CD14-positive monocyte (primary cell): ENCODE measurements at regions of chr10 and their contacts with region 1.

Region 1: DNA sequence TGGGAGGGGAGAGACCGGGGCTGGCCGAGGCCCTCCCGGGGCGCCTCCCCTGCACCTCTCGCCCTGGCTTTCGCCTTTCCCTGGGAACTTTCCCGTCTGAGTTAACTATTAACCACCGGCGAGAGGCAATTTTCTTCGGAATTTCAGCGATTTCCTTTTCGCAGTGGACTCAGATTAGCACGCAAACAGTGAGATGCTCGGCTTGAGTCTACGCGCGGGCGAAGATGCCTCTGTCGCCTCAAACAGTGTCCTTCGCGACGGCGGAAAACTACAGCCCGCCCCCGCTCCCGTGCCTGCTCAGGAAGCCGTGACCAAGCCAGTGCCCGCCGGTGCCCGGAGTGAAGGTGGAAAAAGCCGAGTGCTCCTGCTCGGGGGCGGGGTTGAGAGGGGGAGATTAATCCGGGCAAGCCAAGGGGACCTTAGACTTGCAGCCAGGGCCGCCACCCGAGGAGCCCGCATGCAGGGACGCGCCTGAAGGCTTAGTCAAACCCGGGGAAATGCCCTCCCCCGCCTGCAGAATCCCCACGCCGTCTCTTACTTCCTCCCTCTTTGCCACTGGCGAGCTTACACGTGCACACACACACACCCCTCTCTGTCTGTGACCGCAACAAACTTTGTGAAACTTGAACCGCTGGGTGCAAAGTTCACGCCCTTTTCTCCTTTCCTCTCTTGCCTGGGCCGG is 14.5 kb upstream of the PAX2 start:
- DNase-seq: peak; percentile 23 to 82 (median 42)
- H3K4me3 ChIP-seq: peak overlapping the region in 1 of 3 experiments; percentile 68
- H3K4me3 Mint-ChIP-seq: peak overlapping the region; percentile 73 to 89
- H3K27ac ChIP-seq: no peak overlapping the region
- H3K27ac Mint-ChIP-seq: peak overlapping the region in 1 of 7 donors; percentile 35
- H3K4me1 ChIP-seq: peaks cover 24 to 29% of the 10 kb centered on the region in 2 donors
- H3K4me1 Mint-ChIP-seq: peaks cover 31% of the 10 kb centered on the region
- H3K27me3 ChIP-seq: peaks cover 83 to 95% of the 10 kb centered on the region in 2 donors
- H3K27me3 Mint-ChIP-seq: peaks cover 93 to 99% (median 96%) of the 10 kb centered on the region in 3 donors
- CTCF ChIP-seq: no peak

Region 2: DNA sequence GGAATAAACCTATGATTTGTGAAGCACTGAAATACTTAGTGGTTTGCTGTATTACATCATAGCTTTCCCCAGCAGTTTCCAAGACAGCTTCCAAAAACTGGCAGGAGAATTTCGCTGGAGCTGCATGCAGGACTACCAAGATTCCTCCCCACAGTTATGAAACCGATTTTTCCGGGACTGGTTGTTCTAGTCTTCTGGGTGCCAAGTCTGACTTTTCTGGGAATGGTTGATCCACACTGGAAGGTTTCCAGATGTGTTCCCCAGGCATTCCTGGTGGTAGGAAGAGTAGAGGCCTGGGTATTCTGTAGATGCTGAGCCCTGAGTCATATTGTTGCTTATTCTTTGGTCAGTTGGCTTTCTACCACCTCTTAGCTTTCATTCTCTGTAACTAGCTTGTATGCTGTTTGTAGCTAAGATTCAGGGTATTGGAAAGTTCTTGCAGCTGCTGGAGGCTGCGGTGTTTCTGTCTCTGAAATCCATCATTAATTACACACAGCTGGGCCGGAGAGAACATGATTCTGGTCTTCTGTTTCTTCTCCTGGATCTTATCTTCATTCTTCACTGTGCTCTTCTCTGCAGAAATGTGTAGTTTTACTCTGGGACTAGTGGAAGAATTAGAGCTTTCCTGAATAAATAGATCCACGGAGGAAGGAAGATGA is 942.1 kb before region 1 on chr10:
- intact Hi-C with region 1: no loop called
- DNase-seq: no peak
- H3K4me3 ChIP-seq: no peak overlapping the region
- H3K4me3 Mint-ChIP-seq: no peak overlapping the region
- H3K27ac ChIP-seq: no peak overlapping the region
- H3K27ac Mint-ChIP-seq: no peak overlapping the region
- H3K4me1 ChIP-seq: no peaks in the 10 kb centered on the region
- H3K4me1 Mint-ChIP-seq: no peaks in the 10 kb centered on the region
- H3K27me3 ChIP-seq: no peaks in the 10 kb centered on the region
- H3K27me3 Mint-ChIP-seq: peaks cover 0 to 4% (median 0%) of the 10 kb centered on the region in 3 donors
- CTCF ChIP-seq: no peak

Region 3: DNA sequence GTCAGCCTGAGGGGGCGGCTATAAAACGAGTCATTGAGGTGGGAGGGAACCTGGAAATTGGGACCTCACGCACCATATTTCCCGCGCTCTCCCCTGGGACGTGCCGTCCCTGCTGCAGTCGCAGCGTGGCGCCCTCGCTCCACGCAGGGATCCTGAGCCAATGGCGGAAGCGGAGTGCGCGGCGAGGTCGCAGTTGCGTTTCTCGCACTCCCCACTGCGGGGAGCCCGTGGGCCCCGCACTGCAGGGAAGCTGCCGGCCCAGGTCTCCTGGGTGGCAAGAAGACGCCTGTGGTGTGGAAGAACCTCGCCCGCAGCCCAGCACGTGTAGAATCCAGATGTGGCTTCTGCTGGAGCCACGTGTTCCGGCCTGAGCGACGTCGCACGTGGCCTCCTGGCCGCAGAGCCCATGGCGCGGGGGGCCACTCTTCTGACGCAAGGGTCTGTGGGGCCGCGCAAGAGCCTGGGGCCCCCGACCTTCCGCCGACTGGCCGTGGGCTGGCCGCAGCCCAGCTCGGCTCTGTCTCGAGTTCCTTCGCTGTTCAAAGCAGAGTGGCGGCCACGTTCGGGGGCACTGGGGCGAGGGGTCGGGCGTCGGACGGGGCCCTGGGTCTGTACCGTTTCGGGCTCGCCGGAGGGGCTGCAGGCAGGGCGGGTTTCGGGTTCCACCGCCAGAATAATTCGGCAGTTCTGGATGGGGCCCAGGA is 168.7 kb before region 1 on chr10:
- intact Hi-C with region 1: loop called in 1 of 2 experiments (anchors 10 kb)
- DNase-seq: peak; percentile 60 to 77 (median 64)
- H3K4me3 ChIP-seq: peak overlapping the region in 1 of 3 experiments; percentile 13
- H3K4me3 Mint-ChIP-seq: peak overlapping the region; percentile 17 to 79
- H3K27ac ChIP-seq: no peak overlapping the region
- H3K27ac Mint-ChIP-seq: no peak overlapping the region
- H3K4me1 ChIP-seq: peaks cover 12 to 16% of the 10 kb centered on the region in 2 donors
- H3K4me1 Mint-ChIP-seq: peaks cover 18% of the 10 kb centered on the region
- H3K27me3 ChIP-seq: peaks cover 12 to 48% of the 10 kb centered on the region in 2 donors
- H3K27me3 Mint-ChIP-seq: peaks cover 51 to 64% (median 59%) of the 10 kb centered on the region in 3 donors
- CTCF ChIP-seq: peak; percentile 83

Region 4: DNA sequence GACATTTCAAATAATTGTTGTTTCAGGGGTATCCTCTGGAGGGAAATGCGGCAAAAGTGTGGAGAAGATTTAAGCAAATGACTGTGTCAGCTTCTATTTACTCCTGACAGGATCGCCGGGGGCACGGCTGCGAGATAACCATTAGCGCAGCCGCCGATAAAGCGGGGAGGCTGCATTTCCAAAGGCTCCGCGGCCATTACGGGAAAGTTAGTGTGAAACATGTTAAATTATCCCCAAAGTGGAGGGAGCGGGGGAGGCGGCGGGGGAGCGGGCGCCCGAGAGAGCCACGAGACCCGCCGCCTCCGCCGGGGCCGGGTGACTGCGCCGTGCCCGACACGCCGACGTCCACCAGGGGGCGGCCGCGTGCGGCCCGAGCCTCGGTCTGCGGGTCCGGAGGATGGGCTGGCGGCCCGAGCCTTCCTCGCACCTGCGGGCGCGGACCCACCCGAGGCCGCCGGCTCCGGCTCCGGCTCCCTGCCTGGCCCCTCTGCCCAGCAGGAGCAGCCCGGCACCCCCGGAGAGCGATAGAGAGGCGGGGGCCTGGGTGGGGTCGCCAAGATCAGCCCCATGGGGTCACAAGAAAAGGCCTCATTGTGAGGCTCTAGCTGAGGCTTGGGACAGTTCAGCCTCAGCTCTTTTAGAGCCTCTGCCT is 59.9 kb before region 1 on chr10:
- intact Hi-C with region 1: no loop called
- DNase-seq: peak in 1 of 3 donors; percentile 13
- H3K4me3 ChIP-seq: no peak overlapping the region
- H3K4me3 Mint-ChIP-seq: peak overlapping the region in 1 of 2 donors; percentile 65
- H3K27ac ChIP-seq: no peak overlapping the region
- H3K27ac Mint-ChIP-seq: no peak overlapping the region
- H3K4me1 ChIP-seq: no peaks in the 10 kb centered on the region
- H3K4me1 Mint-ChIP-seq: peaks cover 3% of the 10 kb centered on the region
- H3K27me3 ChIP-seq: peaks cover 41 to 70% of the 10 kb centered on the region in 2 donors
- H3K27me3 Mint-ChIP-seq: peaks cover 61 to 76% (median 76%) of the 10 kb centered on the region in 3 donors
- CTCF ChIP-seq: peak; percentile 89

Region 5: GRCh38 chr10:100791369-100792058 is 60.6 kb after region 1 on chr10:
- intact Hi-C with region 1: no loop called
- DNase-seq: no peak
- H3K4me3 ChIP-seq: no peak overlapping the region
- H3K4me3 Mint-ChIP-seq: no peak overlapping the region
- H3K27ac ChIP-seq: no peak overlapping the region
- H3K27ac Mint-ChIP-seq: no peak overlapping the region
- H3K4me1 ChIP-seq: no peaks in the 10 kb centered on the region
- H3K4me1 Mint-ChIP-seq: no peaks in the 10 kb centered on the region
- H3K27me3 ChIP-seq: peaks cover 3 to 34% of the 10 kb centered on the region in 2 donors
- H3K27me3 Mint-ChIP-seq: peaks cover 32 to 60% (median 48%) of the 10 kb centered on the region in 3 donors
- CTCF ChIP-seq: no peak